ENCODE measurements at regions of chr12 and their contacts with region 1.

Region 1: DNA sequence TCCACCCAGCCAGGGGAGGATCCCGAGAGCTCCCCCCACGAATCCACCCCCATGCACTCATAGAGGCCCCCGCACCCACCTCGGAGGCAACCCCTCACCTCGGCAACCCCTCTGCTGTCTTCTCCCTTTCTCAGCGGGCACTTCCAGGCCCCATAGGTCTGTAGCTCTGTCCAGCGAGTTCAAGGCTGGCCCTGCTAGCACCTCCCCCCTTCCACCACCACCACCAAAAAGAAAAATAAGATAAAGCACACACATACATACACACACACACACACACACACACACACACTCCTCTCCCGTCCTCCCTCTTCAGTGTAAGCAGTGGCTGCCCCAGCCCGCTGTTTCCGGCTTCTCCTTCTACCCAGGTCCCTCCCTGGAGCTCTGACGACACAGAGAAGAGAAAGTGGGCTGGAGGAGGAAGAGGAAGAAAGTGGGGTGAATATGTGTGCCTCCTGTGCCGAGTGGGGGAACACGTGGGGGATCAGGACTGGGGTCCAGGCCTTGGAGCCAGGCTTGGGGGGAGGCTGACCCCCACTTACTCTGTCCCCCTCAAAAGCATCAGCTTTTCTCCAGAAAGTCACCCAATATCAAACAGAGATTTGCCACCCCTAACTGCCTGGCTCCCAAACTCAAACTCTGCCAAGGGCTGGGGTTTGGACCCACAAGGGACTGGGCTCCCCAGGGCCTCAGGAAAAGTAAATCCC is at the start of gene STAT6:
- DNase-seq: no peak
- ATAC-seq: peak; percentile 75
- H3K4me3 ChIP-seq: peak within 1 kb of the TSS; percentile 44 to 75
- H3K27ac ChIP-seq: peak within 1 kb of the TSS; percentile 95
- H3K4me1 ChIP-seq: peaks cover 17% of the 10 kb centered on the region
- H3K27me3 ChIP-seq: no peaks in the 10 kb centered on the region
- CTCF ChIP-seq: no peak; the same call in 1 of the 2 replicates
- total RNA-seq, gene STAT6: 52.3 TPM

Region 2: GRCh38 chr12:56759263-56759908 is 351.8 kb before region 1 on chr12:
- CTCF ChIA-PET with region 1: interaction called, 12 read pairs
- POLR2A ChIA-PET with region 1: no interaction called
- in situ Hi-C with region 1: no loop called
- intact Hi-C with region 1: loop called (anchors 5 kb)
- DNase-seq: no peak
- ATAC-seq: no peak
- H3K4me3 ChIP-seq: no peak overlapping the region
- H3K27ac ChIP-seq: no peak overlapping the region
- H3K4me1 ChIP-seq: no peaks in the 10 kb centered on the region
- H3K27me3 ChIP-seq: no peaks in the 10 kb centered on the region
- CTCF ChIP-seq: no peak

Region 3: DNA sequence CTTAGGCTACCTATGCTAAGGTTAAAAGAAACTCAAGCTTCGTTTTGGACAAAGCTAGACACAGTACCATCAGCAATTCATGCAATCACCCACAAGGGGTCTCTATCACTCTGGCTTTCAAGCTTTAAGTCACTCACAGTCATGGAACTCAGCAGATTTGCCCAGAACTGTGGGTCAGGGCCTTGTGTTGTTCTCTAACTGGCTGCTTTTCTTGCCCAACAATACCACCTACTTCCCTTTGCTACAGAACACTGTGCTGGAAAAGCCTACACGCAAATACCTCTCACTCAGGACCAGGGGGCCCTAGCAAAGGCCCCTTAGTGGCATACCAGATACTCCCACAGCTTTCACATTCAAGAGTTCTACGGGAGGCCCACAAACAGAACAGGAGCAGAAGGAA is 41.7 kb before region 1 on chr12:
- CTCF ChIA-PET with region 1: interaction called, 84 read pairs
- POLR2A ChIA-PET with region 1: interaction called, 11 read pairs
- in situ Hi-C with region 1: no loop called
- intact Hi-C with region 1: loop called (anchors 1 kb)
- DNase-seq: peak; percentile 75
- ATAC-seq: peak; percentile 98
- H3K4me3 ChIP-seq: no peak overlapping the region
- H3K27ac ChIP-seq: 0 out of 2 replicates have a peak overlapping the region, but pooled peaks have one; percentile 25
- H3K4me1 ChIP-seq: no peaks in the 10 kb centered on the region
- H3K27me3 ChIP-seq: no peaks in the 10 kb centered on the region
- CTCF ChIP-seq: peak; percentile 85

Region 4: GRCh38 chr12:57182921-57183790 is 72.0 kb after region 1 on chr12:
- CTCF ChIA-PET with region 1: interaction called, 14 read pairs
- POLR2A ChIA-PET with region 1: no interaction called
- in situ Hi-C with region 1: no loop called
- intact Hi-C with region 1: no loop called
- DNase-seq: peak; percentile 59
- ATAC-seq: peak; percentile 95
- H3K4me3 ChIP-seq: no peak overlapping the region
- H3K27ac ChIP-seq: no peak overlapping the region
- H3K4me1 ChIP-seq: no peaks in the 10 kb centered on the region
- H3K27me3 ChIP-seq: no peaks in the 10 kb centered on the region
- CTCF ChIP-seq: peak; percentile 94